Panc1 (cell line): ENCODE measurements at regions of chr3 and their contacts with region 1.

Region 1: GRCh38 chr3:184371570-184372018 is 6.4 kb downstream of the THPO start:
- DNase-seq: peak; percentile 84
- ATAC-seq: peak; percentile 93
- H3K4me3 ChIP-seq: no peak overlapping the region
- H3K27ac ChIP-seq: no peak overlapping the region
- H3K4me1 ChIP-seq: peaks cover 12% of the 10 kb centered on the region
- H3K27me3 ChIP-seq: peaks cover 8% of the 10 kb centered on the region
- CTCF ChIP-seq: peak; percentile 98

Region 2: DNA sequence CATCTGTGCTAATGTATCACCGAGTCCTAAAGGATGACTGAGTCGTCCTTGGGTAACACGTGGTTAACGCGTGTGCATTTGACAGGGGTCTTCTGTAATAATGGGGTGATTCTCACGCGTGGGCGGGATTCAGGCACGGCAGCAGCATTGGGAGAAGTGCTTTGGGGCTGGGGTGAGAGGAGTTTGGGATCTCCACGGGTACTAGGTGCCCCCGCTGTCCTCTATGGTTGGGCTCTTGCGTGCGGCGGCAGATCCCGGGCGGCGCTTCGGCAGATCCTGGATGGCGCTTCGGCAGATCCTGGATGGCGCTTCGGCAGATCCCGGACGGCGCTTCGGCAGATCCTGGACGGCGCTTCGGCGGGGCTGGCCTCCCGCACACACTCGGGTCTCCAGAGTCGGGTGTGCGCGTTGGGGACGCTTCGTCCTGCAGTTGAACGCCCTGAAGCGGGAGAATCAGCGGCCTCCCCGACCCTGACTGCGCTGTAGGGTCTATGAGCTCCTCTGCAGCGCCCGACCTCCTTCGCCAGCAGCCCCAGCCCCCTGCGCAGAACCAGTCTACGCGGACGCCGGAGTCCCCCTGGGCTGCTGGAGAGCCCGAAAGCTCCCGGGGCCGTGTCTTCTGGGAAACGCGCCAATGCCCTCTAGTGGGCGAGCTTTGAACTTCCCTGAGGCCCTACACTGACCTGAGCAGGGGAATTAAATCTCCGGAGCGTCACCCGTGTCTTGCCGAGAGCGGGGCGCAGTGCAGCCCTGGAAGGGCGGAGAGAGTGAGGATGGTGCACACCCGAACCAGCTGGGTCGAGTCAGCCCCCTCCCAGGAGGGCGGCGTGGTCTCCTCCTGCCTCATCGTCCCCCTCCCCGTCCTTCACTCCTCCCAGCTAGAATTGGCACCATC is 141.9 kb after region 1 on chr3:
- CTCF ChIA-PET with region 1: interaction called, 37 read pairs
- POLR2A ChIA-PET with region 1: no interaction called
- in situ Hi-C with region 1: no loop called
- intact Hi-C with region 1: loop called (anchors 10 kb)
- DNase-seq: peak; percentile 46
- ATAC-seq: peak; percentile 99
- H3K4me3 ChIP-seq: peak overlapping the region; percentile 31 to 50
- H3K27ac ChIP-seq: no peak overlapping the region
- H3K4me1 ChIP-seq: 0 out of 2 replicates have a peak, but pooled peaks cover 2% of the 10 kb centered on the region
- H3K27me3 ChIP-seq: peaks cover 58% of the 10 kb centered on the region
- CTCF ChIP-seq: peak; percentile 98

Region 3: DNA sequence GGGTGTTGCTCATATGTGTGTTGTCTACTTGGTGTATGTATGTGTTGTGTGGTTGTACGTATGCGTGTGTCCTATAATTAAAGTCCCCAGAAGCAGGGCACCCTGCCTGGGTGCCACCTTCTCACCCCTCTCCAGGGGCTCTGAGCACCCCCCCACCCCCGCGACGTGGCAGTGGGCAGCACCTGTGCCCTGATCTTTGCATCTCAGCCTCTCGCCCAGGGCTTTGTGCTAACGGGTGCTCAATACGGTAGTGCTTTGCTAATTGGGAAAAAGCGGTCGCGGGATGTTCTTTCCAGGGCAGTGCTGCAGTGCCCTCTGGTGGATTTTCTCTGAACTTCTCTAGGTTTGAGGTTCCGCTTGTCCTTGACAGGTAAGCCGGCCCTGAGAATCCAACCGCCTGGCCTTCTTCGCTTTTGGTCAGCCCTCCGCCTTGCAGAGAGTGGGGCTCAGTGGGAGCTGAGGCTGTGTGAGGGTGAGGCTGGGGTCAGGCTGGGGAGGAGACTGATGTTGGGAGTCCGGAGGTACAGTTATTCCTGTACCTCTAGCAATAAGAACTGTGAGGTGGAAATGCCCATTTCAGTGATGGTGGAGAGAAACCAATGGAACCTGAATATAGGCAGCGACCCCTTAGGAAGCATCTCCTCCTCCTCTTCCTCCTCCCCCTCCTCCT is 172.4 kb after region 1 on chr3:
- CTCF ChIA-PET with region 1: interaction called, 53 read pairs
- POLR2A ChIA-PET with region 1: interaction called, 8 read pairs
- in situ Hi-C with region 1: no loop called
- intact Hi-C with region 1: loop called (anchors 2 kb)
- DNase-seq: peak; percentile 76
- ATAC-seq: peak; percentile 85
- H3K4me3 ChIP-seq: no peak overlapping the region
- H3K27ac ChIP-seq: no peak overlapping the region
- H3K4me1 ChIP-seq: no peaks in the 10 kb centered on the region
- H3K27me3 ChIP-seq: 0 out of 2 replicates have a peak, but pooled peaks cover 5% of the 10 kb centered on the region
- CTCF ChIP-seq: peak; percentile 97